ENCODE measurements at regions of chr20 and their contacts with region 1.

Region 1: GRCh38 chr20:43955062-43955749 is 40.6 kb downstream of the TOX2 start:
- DNase-seq: peak; percentile 73
- ATAC-seq: peak; percentile 85
- H3K4me3 ChIP-seq: 0 out of 2 replicates have a peak overlapping the region, but pooled peaks have one; percentile 11
- H3K27ac ChIP-seq: peak overlapping the region; percentile 9
- H3K4me1 ChIP-seq: peaks cover 40% of the 10 kb centered on the region
- H3K27me3 ChIP-seq: no peaks in the 10 kb centered on the region
- CTCF ChIP-seq: no peak
- EP300 ChIP-seq: 0 out of 4 replicates have a peak, but pooled peaks of 1 of the 2 experiments have one; percentile 5
- POLR2A ChIP-seq: no peak
- RAD21 ChIP-seq: no peak

Region 2: DNA sequence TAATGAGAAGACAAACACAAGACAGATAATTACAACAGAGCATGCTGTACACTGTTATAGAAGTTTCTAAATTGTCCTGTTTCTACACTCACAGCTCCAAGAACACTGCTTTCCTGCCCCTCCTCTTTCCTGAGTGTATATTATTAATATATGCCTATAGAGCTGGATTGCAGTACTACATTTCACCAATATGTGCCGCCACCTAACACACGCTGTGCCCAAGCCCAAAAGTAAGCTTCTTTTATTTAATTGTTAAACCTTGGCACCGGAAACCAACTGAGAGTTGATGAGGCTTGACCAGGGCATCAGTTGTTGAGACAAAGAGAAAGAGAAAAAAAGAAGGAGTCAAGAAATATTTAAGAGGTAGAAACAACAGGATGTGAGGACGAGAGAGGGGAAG is 749.5 kb before region 1 on chr20:
- CTCF ChIA-PET with region 1: no interaction called
- POLR2A ChIA-PET with region 1: no interaction called
- RAD21 ChIA-PET with region 1: no interaction called
- SMC1A ChIA-PET with region 1: no interaction called
- in situ Hi-C with region 1: no loop called
- intact Hi-C with region 1: no loop called
- DNase-seq: no peak
- ATAC-seq: no peak
- H3K4me3 ChIP-seq: no peak overlapping the region
- H3K27ac ChIP-seq: no peak overlapping the region
- H3K4me1 ChIP-seq: no peaks in the 10 kb centered on the region
- H3K27me3 ChIP-seq: no peaks in the 10 kb centered on the region; a peak in 1 of 4 replicates
- CTCF ChIP-seq: no peak
- EP300 ChIP-seq: no peak
- POLR2A ChIP-seq: no peak
- RAD21 ChIP-seq: no peak

Region 3: DNA sequence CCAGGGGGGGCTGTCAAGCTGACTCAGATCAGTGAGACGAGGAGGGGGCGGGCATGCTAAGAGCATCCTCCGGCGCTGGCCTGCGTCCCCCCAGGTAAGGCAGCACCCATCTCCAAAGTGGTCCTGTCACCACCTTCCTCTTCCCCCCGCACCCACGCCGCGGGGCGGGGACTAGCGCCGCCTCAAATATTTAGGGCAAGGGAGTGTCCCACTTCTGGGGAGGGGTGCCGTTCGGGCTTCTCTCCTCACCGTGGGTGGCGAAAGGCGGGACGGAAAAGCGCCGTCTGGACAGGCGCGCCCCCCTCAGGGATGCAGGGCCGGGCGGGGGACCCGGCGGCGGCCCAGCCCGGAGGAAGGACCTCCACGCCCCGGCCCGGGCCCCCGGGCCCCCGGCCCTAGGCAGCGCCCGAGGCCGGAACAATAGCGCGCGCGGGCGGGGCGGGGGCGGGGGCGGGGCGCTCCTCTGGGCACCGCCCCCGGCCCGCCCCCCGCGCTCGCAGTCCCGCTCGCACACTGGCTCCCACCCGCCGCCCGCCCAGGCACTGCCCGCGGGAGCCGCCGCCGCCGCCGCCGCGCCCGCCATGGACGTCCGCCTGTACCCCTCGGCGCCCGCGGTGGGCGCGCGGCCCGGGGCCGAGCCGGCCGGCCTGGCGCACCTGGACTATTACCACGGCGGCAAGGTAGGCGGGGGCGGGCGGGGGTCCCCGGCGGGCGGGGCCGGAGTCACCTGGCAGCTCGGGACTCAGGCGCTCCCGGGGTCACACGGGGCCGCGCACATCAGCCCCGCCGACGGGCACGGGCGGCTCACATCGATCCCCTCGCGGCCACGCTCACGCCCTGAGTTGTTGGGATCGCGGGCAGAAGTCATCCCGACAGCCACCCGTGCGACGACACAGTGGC is 40.6 kb before region 1 on chr20 and contains the start of gene TOX2:
- CTCF ChIA-PET with region 1: interaction called, 3 read pairs
- POLR2A ChIA-PET with region 1: no interaction called
- RAD21 ChIA-PET with region 1: interaction called, 11 read pairs
- SMC1A ChIA-PET with region 1: interaction called, 3 read pairs
- in situ Hi-C with region 1: no loop called
- intact Hi-C with region 1: no loop called
- DNase-seq: no peak
- ATAC-seq: peak; percentile 43
- H3K4me3 ChIP-seq: peak within 1 kb of the TSS; percentile 68; the same call in 1 of the 2 replicates
- H3K27ac ChIP-seq: peak within 1 kb of the TSS; percentile 28; the same call in 1 of the 2 replicates
- H3K4me1 ChIP-seq: peaks cover 18% of the 10 kb centered on the region
- H3K27me3 ChIP-seq: peaks cover 0 to 4% of the 10 kb centered on the region in 2 experiments; a peak in 2 of 4 replicates
- CTCF ChIP-seq: no peak
- EP300 ChIP-seq: no peak
- POLR2A ChIP-seq: no peak; the same call in 1 of the 2 replicates
- RAD21 ChIP-seq: no peak
- polyA plus RNA-seq, gene TOX2: 2.6 to 6.2 TPM

Region 4: GRCh38 chr20:43925801-43926200 is 29.4 kb before region 1 on chr20:
- CTCF ChIA-PET with region 1: interaction called, 12 read pairs
- POLR2A ChIA-PET with region 1: interaction called, 4 read pairs
- RAD21 ChIA-PET with region 1: interaction called, 15 read pairs
- SMC1A ChIA-PET with region 1: interaction called, 28 read pairs
- in situ Hi-C with region 1: no loop called
- intact Hi-C with region 1: loop called (anchors 2 kb)
- DNase-seq: no peak
- ATAC-seq: peak; percentile 54
- H3K4me3 ChIP-seq: no peak overlapping the region
- H3K27ac ChIP-seq: no peak overlapping the region
- H3K4me1 ChIP-seq: peaks cover 36% of the 10 kb centered on the region
- H3K27me3 ChIP-seq: no peaks in the 10 kb centered on the region
- CTCF ChIP-seq: peak in 2 of 3 experiments; percentile 8 to 36; a peak in 2 of 6 replicates
- EP300 ChIP-seq: no peak
- POLR2A ChIP-seq: no peak
- RAD21 ChIP-seq: peak; percentile 24; the same call in 1 of the 2 replicates

Region 5: GRCh38 chr20:43977252-43977651 is 22.0 kb after region 1 on chr20:
- CTCF ChIA-PET with region 1: interaction called, 6 read pairs
- POLR2A ChIA-PET with region 1: interaction called, 3 read pairs
- RAD21 ChIA-PET with region 1: interaction called, 7 read pairs
- SMC1A ChIA-PET with region 1: interaction called, 10 read pairs
- in situ Hi-C with region 1: no loop called
- intact Hi-C with region 1: no loop called
- DNase-seq: no peak
- ATAC-seq: no peak
- H3K4me3 ChIP-seq: no peak overlapping the region
- H3K27ac ChIP-seq: no peak overlapping the region
- H3K4me1 ChIP-seq: no peaks in the 10 kb centered on the region
- H3K27me3 ChIP-seq: no peaks in the 10 kb centered on the region
- CTCF ChIP-seq: no peak
- EP300 ChIP-seq: no peak
- POLR2A ChIP-seq: no peak
- RAD21 ChIP-seq: no peak